Thyroid gland (tissue), 4 donors: ENCODE measurements at regions of chr12 and their contacts with region 1.

Region 1: GRCh38 chr12:46303039-46303666 is 34.3 kb upstream of the SLC38A1 start:
- DNase-seq: peak; percentile 53 to 61
- H3K4me3 ChIP-seq: no peak overlapping the region
- H3K27ac ChIP-seq: no peak overlapping the region
- H3K4me1 ChIP-seq: no peaks in the 10 kb centered on the region
- H3K27me3 ChIP-seq: no peaks in the 10 kb centered on the region
- CTCF ChIP-seq: peak; percentile 40 to 74 (median 71)
- POLR2A ChIP-seq: no peak

Region 2: GRCh38 chr12:46158501-46158900 is 144.7 kb before region 1 on chr12:
- intact Hi-C with region 1: loop called (anchors 5 kb)
- DNase-seq: no peak
- H3K4me3 ChIP-seq: no peak overlapping the region
- H3K27ac ChIP-seq: peak overlapping the region; percentile 80 to 93 (median 90)
- H3K4me1 ChIP-seq: peaks cover 29 to 31% of the 10 kb centered on the region in 2 donors
- H3K27me3 ChIP-seq: no peaks in the 10 kb centered on the region
- CTCF ChIP-seq: no peak
- POLR2A ChIP-seq: no peak

Region 3: DNA sequence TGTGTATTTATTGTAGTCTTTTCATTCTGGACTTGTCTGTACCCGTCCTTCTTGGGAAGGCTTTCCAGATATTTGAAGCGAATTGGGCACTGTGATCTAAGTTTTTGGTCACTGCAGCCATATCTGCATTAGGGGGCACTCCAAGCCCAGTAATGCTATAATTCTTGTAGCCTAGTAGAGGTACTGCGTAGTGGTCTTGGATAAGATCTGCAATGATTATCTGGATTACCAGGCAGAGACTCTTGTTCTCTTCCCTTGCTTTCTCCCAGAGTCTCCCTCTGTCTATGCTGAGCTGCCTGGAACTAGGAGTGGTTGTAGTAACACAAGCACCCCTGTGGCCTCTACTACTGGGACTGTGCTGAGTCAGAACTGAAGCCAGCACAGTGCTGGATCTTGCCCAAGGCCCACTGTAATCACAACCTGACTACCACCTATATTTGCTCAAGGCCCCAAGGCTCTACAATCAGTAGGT is 39.4 kb after region 1 on chr12:
- intact Hi-C with region 1: no loop called
- DNase-seq: peak in 1 of 2 donors; percentile 6
- H3K4me3 ChIP-seq: no peak overlapping the region
- H3K27ac ChIP-seq: no peak overlapping the region
- H3K4me1 ChIP-seq: no peaks in the 10 kb centered on the region
- H3K27me3 ChIP-seq: no peaks in the 10 kb centered on the region
- CTCF ChIP-seq: peak in 4 of 6 experiments; percentile 50 to 69 (median 62)
- POLR2A ChIP-seq: no peak